Naive thymus-derived CD4-positive, alpha-beta T cell (primary cell): ENCODE measurements at regions of chr6 and their contacts with region 1.

Region 1: DNA sequence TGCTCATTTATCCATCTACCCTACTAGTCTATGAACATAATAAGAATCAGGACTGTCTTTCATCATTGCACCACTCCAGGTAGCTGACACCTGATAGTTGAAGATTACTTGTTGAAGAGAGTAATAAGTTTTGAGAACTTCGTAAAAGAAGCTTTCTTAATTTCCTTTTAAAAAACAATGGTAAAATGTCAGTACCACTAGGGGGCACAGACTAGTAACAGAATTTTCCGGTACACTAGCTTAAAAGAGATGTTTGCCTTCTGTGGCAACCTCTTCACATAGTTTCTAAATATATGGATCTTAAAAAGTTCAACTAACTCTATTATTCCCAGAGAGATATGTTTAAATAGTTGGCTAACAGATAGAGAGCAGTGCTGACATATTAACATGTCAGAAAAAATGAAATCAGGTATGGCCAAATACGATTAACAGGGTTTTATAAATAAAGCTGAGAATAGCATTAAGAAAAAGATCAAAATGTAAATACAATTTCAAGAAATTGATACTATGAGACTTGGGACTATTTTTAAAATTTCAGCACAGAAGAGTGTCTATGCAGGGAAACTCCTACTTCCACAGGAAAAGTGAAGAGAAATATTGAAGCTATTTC is 5.4 kb upstream of the KCNQ5 start:
- DNase-seq: peak in 5 of 9 donors; percentile 40 to 58 (median 49)
- ATAC-seq: no peak
- H3K4me3 ChIP-seq: no peak overlapping the region
- H3K4me3 Mint-ChIP-seq: peak overlapping the region in 4 of 10 donors; percentile 12 to 32 (median 22)
- H3K27ac ChIP-seq: no peak overlapping the region
- H3K27ac Mint-ChIP-seq: peak overlapping the region in 7 of 9 donors; percentile 37 to 80 (median 71)
- H3K4me1 ChIP-seq: peaks cover 18 to 21% of the 10 kb centered on the region in 2 donors
- H3K4me1 Mint-ChIP-seq: peaks cover 23 to 70% (median 52%) of the 10 kb centered on the region in 7 donors
- H3K27me3 ChIP-seq: no peaks in the 10 kb centered on the region
- H3K27me3 Mint-ChIP-seq: no peaks in the 10 kb centered on the region

Region 2: DNA sequence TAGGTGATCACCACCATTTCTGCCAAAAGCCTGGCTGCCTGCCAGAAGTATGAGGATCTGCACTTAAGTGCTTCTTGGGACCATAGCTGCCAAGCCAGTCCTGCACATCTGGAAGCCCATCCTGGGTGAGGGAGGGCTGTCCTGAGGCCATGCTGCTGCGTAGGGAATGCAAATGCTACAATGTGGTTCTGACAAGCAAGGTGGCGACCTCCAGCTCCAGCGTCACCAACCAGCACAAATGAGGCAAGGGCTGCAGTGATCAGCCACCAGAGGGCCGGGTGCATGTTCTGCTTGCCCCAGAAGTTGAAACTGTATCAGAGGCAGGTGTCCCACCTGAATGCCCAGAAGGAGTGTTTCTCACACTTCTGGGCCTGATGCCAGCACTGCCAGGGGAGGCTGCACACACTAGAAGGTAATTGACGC is 93.8 kb before region 1 on chr6:
- CTCF ChIA-PET with region 1: interaction called, 11 read pairs
- POLR2A ChIA-PET with region 1: interaction called, 4 read pairs
- intact Hi-C with region 1: loop called in 1 of 2 experiments (anchors 1 kb)
- DNase-seq: peak in 8 of 9 donors; percentile 7 to 54 (median 22)
- ATAC-seq: no peak
- H3K4me3 ChIP-seq: no peak overlapping the region
- H3K4me3 Mint-ChIP-seq: no peak overlapping the region
- H3K27ac ChIP-seq: no peak overlapping the region
- H3K27ac Mint-ChIP-seq: no peak overlapping the region
- H3K4me1 ChIP-seq: no peaks in the 10 kb centered on the region
- H3K4me1 Mint-ChIP-seq: no peaks in the 10 kb centered on the region
- H3K27me3 ChIP-seq: peaks cover 0 to 3% of the 10 kb centered on the region in 2 donors
- H3K27me3 Mint-ChIP-seq: peaks cover 0 to 13% (median 4%) of the 10 kb centered on the region in 5 donors

Region 3: DNA sequence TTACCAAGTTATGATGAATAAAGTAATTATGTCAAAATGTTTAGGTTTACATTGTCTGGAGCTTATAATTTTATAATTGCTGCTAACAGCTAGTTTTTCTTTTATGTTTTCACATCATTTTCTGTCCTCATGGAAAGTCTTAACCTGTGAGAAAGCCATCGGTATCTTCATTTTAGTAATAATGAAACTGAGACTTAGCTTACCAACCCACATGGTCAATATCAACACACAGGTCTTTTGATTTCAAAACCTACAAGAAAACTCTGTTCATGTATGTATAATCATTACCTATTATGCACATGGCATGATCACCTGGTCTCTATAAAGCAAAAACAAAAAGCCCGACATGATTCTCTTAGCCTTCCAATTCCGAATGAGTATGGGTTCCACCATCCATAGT is 67.3 kb after region 1 on chr6:
- CTCF ChIA-PET with region 1: no interaction called
- POLR2A ChIA-PET with region 1: no interaction called
- intact Hi-C with region 1: no loop called
- DNase-seq: no peak
- ATAC-seq: no peak
- H3K4me3 ChIP-seq: no peak overlapping the region
- H3K4me3 Mint-ChIP-seq: no peak overlapping the region
- H3K27ac ChIP-seq: no peak overlapping the region
- H3K27ac Mint-ChIP-seq: no peak overlapping the region
- H3K4me1 ChIP-seq: no peaks in the 10 kb centered on the region
- H3K4me1 Mint-ChIP-seq: peaks cover 0 to 14% (median 4%) of the 10 kb centered on the region in 7 donors
- H3K27me3 ChIP-seq: no peaks in the 10 kb centered on the region
- H3K27me3 Mint-ChIP-seq: no peaks in the 10 kb centered on the region

Region 4: GRCh38 chr6:73088138-73088813 is 471.8 kb after region 1 on chr6:
- CTCF ChIA-PET with region 1: no interaction called
- POLR2A ChIA-PET with region 1: no interaction called
- intact Hi-C with region 1: no loop called
- DNase-seq: no peak
- ATAC-seq: no peak
- H3K4me3 ChIP-seq: no peak overlapping the region
- H3K4me3 Mint-ChIP-seq: no peak overlapping the region
- H3K27ac ChIP-seq: no peak overlapping the region
- H3K27ac Mint-ChIP-seq: no peak overlapping the region
- H3K4me1 ChIP-seq: no peaks in the 10 kb centered on the region
- H3K4me1 Mint-ChIP-seq: peaks cover 0 to 2% (median 0%) of the 10 kb centered on the region in 7 donors
- H3K27me3 ChIP-seq: no peaks in the 10 kb centered on the region
- H3K27me3 Mint-ChIP-seq: no peaks in the 10 kb centered on the region

Region 5: GRCh38 chr6:73129653-73130443 is 513.3 kb after region 1 on chr6:
- CTCF ChIA-PET with region 1: interaction called, 102 read pairs
- POLR2A ChIA-PET with region 1: interaction called, 4 read pairs
- intact Hi-C with region 1: loop called (anchors 1 kb)
- DNase-seq: peak; percentile 52 to 85 (median 77)
- ATAC-seq: peak; percentile 93
- H3K4me3 ChIP-seq: no peak overlapping the region
- H3K4me3 Mint-ChIP-seq: peak overlapping the region in 8 of 10 donors; percentile 23 to 71 (median 52)
- H3K27ac ChIP-seq: no peak overlapping the region
- H3K27ac Mint-ChIP-seq: peak overlapping the region in 1 of 9 donors; percentile 48
- H3K4me1 ChIP-seq: no peaks in the 10 kb centered on the region
- H3K4me1 Mint-ChIP-seq: peaks cover 0 to 6% (median 3%) of the 10 kb centered on the region in 7 donors
- H3K27me3 ChIP-seq: no peaks in the 10 kb centered on the region
- H3K27me3 Mint-ChIP-seq: peaks cover 0 to 4% (median 0%) of the 10 kb centered on the region in 5 donors